ENCODE measurements at regions of chr17 and their contacts with region 1.

Region 1: DNA sequence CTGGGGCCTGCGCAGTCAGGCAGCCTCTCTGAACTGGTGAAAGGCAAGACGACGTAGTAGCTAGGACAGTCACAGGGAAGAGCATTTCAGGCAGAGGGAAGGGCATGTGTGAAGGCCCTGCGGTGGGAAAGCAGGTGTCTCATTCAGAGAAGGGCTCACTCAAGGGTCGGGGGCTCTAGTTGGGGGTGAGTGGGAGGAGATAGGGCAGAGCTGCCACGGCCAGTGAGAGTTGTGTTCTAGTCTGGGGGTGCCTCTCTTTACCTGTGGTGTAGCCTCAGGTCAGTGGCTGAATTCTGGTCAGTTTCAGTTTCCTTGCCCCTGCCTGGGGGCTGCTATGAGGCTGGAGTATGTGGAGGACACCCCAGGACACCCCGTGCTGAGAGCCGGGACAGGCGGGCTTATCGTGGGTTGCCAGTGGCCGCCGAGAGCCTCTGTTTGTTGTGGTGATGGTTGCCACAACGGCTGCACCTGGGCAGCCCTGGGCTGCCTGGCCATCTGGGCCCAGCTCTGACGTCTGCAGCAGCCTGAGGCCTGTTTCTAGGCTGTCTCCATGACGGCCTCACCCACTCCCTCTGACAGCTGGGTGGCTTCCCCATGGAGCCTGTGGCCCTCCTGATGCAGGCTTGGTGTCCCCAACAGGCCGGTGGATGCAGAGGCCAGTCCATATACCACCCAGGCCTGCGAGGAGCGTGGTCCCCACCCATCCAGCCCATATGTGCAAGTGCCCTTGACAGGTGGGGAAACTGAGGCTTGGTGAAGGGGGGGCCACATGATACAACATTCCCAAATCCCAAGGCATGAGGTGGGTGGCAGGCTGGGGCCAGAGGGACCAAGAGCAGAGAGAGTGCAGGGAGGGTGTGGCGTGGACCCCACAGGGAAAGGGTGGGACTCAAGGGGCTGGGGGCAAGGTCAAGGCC is 10.8 kb downstream of the MAP2K3 start:
- DNase-seq: no peak
- ATAC-seq: no peak
- H3K4me3 Mint-ChIP-seq: no peak overlapping the region
- H3K27ac Mint-ChIP-seq: peak overlapping the region; percentile 4
- H3K4me1 Mint-ChIP-seq: peaks cover 11% of the 10 kb centered on the region
- H3K27me3 Mint-ChIP-seq: peaks cover 4% of the 10 kb centered on the region

Region 2: DNA sequence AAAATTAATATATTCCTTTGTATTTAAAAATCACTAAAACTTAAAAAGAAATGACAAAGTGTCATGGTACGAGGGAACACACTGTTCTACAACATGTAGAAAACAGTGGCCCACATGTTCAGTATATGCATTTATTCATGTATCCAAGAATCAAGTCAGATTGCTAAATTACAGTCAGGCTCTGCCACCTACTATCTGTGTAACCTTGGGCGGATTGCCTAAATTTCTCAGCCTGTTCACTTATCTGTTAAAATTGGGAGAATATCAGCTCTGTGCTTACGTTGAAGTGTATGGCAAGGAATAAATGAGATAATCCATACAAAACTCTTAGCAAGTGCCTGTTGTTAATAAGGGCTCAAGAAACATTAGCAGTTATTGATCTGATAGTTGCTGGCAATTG is 249.1 kb before region 1 on chr17:
- CTCF ChIA-PET with region 1: no interaction called
- POLR2A ChIA-PET with region 1: no interaction called
- intact Hi-C with region 1: no loop called
- DNase-seq: no peak
- ATAC-seq: no peak
- H3K4me3 Mint-ChIP-seq: no peak overlapping the region
- H3K27ac Mint-ChIP-seq: no peak overlapping the region
- H3K4me1 Mint-ChIP-seq: peaks cover 9% of the 10 kb centered on the region
- H3K27me3 Mint-ChIP-seq: peaks cover 5% of the 10 kb centered on the region

Region 3: DNA sequence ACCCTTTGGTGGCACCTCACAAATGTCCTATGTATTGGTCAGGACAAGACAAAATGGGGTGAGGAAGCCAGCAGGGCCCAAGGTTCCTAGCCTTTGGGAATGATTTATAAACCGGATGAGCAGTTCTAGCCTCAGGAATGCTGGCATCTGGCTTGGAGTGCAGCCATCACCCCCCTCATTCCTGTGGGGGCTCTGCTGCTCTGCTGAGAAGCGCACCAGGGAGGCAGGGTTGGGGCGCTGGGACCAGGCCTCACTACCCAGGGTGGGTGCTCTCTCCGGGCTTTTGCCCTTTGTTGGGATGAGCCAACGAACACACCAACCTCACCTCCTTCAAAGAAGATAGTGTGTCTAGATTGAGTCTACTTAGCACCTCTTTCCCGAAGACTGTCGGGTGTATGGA is 120.6 kb before region 1 on chr17:
- CTCF ChIA-PET with region 1: no interaction called
- POLR2A ChIA-PET with region 1: no interaction called
- intact Hi-C with region 1: no loop called
- DNase-seq: no peak
- ATAC-seq: no peak
- H3K4me3 Mint-ChIP-seq: no peak overlapping the region
- H3K27ac Mint-ChIP-seq: no peak overlapping the region
- H3K4me1 Mint-ChIP-seq: peaks cover 18% of the 10 kb centered on the region
- H3K27me3 Mint-ChIP-seq: no peaks in the 10 kb centered on the region

Region 4: GRCh38 chr17:22138861-22139469 is 843.7 kb after region 1 on chr17:
- CTCF ChIA-PET with region 1: no interaction called
- POLR2A ChIA-PET with region 1: no interaction called
- intact Hi-C with region 1: loop called in 1 of 2 experiments (anchors 10 kb)
- DNase-seq: no peak
- ATAC-seq: no peak
- H3K4me3 Mint-ChIP-seq: no peak overlapping the region
- H3K27ac Mint-ChIP-seq: no peak overlapping the region
- H3K4me1 Mint-ChIP-seq: no peaks in the 10 kb centered on the region
- H3K27me3 Mint-ChIP-seq: no peaks in the 10 kb centered on the region

Region 5: DNA sequence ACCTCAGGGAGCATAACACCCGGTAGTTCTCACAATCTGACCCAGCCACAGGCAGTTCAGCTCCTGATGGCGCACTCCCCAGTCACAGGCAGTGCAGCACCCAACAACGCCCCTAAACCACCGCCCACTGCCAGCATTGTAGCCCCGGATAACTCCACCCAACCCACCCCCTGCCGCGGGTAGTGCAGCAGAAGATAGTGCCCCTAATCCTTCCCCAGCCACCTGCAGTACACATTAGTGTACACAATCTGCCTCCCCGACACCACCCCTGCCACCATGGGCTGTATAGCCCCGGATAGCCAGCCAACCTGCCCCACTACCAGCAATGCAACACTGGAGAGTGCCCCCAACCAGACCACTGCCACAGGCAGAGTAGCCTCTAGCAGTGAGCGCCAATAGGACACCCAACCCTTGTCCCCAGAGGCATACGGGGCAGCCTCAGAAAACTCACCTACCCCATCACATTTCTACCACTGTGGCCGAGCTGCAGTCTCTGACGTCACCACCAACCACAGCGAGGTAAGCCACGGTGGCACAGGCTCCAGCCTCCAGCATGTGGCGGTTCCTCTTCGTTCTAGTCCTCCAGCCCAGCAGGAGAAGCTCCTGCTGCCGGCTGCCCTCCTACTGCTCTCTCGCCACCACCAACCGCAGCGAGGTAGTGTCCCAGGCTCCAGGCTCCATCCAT is 1274.3 kb after region 1 on chr17:
- CTCF ChIA-PET with region 1: no interaction called
- POLR2A ChIA-PET with region 1: no interaction called
- intact Hi-C with region 1: loop called in 1 of 2 experiments (anchors 10 kb)
- DNase-seq: no peak
- ATAC-seq: no peak
- H3K4me3 Mint-ChIP-seq: no peak overlapping the region
- H3K27ac Mint-ChIP-seq: no peak overlapping the region
- H3K4me1 Mint-ChIP-seq: no peaks in the 10 kb centered on the region
- H3K27me3 Mint-ChIP-seq: no peaks in the 10 kb centered on the region

Measured in activated CD4-positive, alpha-beta T cell treated with anti-CD3 and anti-CD28 coated beads for 36 hours (primary cell).